MCF 10A (cell line): ENCODE measurements at regions of chr14 and their contacts with region 1.

Region 1: GRCh38 chr14:95527387-95528002 is 7.4 kb upstream of the GLRX5 start:
- DNase-seq: peak; percentile 67
- H3K4me3 Mint-ChIP-seq: no peak overlapping the region
- H3K27ac Mint-ChIP-seq: no peak overlapping the region
- H3K4me1 Mint-ChIP-seq: peaks cover 62% of the 10 kb centered on the region
- H3K27me3 Mint-ChIP-seq: no peaks in the 10 kb centered on the region
- CTCF ChIP-seq: peak; percentile 72

Region 2: DNA sequence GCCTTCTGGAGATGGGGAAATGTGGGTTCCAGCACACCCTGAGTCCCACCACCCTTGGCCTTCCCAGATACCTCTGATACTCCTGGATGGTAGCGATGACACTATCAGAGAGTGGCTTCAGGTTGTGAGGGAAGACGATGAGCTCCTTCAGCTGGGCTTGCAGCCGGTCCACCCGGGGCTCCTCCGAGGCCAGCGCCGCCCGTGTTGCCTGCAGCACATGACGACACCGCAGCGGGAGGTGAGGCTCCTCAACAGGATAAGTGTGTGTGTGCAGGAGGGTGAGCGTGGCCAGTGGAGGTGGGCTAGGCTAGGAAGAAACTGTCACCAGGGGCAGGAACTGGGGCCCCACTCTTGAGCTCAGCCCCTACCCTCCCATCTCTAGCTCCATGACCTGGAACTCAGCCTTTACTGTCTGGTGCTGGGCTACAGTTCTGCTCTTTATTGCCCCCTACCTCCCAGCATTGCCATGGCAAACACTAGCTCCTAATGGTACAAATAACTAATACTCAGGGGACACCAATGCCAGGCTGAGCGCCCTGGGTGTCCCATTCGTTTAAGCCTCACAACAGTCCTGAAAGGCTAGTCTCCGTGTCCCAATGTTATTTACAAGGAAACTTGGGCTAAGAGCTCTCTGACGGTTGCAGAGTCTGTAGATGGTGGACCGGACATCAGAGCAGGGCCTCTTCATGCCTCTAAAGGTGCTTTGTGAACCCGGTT is 75.2 kb before region 1 on chr14:
- CTCF ChIA-PET with region 1: interaction called, 22 read pairs
- POLR2A ChIA-PET with region 1: interaction called, 3 read pairs
- intact Hi-C with region 1: no loop called
- DNase-seq: peak; percentile 28
- H3K4me3 Mint-ChIP-seq: no peak overlapping the region
- H3K27ac Mint-ChIP-seq: no peak overlapping the region
- H3K4me1 Mint-ChIP-seq: peaks cover 3% of the 10 kb centered on the region
- H3K27me3 Mint-ChIP-seq: no peaks in the 10 kb centered on the region
- CTCF ChIP-seq: peak; percentile 26

Region 3: GRCh38 chr14:95460647-95461478 is 66.6 kb before region 1 on chr14:
- CTCF ChIA-PET with region 1: interaction called, 8 read pairs
- POLR2A ChIA-PET with region 1: interaction called, 3 read pairs
- intact Hi-C with region 1: loop called (anchors 5 kb)
- DNase-seq: peak; percentile 89
- H3K4me3 Mint-ChIP-seq: no peak overlapping the region
- H3K27ac Mint-ChIP-seq: peak overlapping the region; percentile 2
- H3K4me1 Mint-ChIP-seq: peaks cover 18% of the 10 kb centered on the region
- H3K27me3 Mint-ChIP-seq: no peaks in the 10 kb centered on the region
- CTCF ChIP-seq: no peak

Region 4: DNA sequence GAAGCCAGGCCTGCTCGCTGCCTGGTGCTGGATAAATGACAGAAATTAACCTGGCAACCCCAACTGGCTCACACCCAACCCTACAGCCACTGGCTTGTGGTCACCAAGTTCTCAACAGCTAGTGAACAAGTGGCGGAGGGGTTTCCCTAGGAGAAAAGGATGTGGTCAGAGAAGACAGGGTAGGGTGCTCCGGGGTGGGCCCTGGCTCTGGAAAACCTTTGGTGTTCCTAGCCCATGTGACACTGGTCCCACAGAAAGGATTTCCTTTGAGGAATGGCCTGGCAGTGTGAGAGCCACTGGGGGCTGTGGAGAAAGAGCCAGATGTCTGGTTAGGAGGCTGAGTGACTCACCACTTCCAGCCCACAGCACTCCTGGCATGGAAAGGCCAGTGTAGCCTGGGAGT is 19.8 kb before region 1 on chr14:
- CTCF ChIA-PET with region 1: interaction called, 40 read pairs
- POLR2A ChIA-PET with region 1: interaction called, 6 read pairs
- intact Hi-C with region 1: no loop called
- DNase-seq: peak; percentile 90
- H3K4me3 Mint-ChIP-seq: no peak overlapping the region
- H3K27ac Mint-ChIP-seq: peak overlapping the region; percentile 66
- H3K4me1 Mint-ChIP-seq: peaks cover 26% of the 10 kb centered on the region
- H3K27me3 Mint-ChIP-seq: no peaks in the 10 kb centered on the region
- CTCF ChIP-seq: no peak

Region 5: DNA sequence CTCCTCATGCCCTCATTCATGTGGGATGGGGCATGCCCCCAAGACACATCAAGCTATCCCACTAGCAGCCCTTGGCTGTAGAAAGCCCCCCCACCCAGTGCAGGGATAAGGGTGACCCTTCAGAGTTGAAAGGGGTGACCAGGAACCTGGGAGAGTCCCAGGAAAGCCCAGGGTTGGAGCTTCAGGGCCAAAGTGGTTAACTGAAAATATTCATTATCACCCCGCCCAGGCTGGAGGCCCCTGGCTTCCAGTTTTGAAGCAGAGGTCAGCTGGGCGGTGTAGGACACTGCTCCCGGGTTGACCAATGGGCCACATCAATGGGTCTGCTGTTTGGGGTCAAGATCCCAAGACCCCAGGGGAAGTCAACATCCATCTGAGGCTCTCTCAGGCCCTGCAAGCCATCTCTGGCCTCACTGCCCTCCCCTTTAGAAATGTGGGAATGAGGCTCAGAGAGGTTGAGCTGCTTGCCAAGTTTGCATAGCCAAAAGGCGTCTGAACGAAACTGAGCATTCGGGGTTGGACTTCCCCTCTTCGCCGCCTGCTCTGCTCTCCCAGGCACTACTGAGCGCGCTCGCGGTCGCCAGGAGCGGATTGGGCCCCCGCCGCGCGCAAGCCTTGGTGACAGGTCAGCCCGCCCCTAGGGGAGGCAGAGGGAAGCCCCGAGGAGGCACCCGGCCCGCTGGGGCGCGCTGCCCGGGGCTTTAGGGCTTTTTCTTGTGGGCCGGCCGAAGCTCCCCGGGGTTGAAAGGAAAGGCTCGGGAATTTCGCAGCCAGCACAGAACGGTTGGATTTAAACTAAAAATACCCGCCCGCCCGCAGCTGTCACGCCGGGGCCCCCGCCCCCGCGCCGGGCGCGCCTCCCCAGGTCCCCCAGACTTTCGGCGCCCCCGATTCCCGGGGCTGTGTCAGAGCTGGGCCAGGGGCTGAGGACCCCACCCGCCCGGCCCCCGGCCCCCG is 11.6 kb before region 1 on chr14:
- CTCF ChIA-PET with region 1: interaction called, 40 read pairs
- POLR2A ChIA-PET with region 1: interaction called, 8 read pairs
- intact Hi-C with region 1: no loop called
- DNase-seq: peak; percentile 49
- H3K4me3 Mint-ChIP-seq: peak overlapping the region; percentile 71
- H3K27ac Mint-ChIP-seq: no peak overlapping the region
- H3K4me1 Mint-ChIP-seq: peaks cover 34% of the 10 kb centered on the region
- H3K27me3 Mint-ChIP-seq: no peaks in the 10 kb centered on the region
- CTCF ChIP-seq: peak; percentile 36